HCT116 (cell line): ENCODE measurements at regions of chr3 and their contacts with region 1.

Region 1: DNA sequence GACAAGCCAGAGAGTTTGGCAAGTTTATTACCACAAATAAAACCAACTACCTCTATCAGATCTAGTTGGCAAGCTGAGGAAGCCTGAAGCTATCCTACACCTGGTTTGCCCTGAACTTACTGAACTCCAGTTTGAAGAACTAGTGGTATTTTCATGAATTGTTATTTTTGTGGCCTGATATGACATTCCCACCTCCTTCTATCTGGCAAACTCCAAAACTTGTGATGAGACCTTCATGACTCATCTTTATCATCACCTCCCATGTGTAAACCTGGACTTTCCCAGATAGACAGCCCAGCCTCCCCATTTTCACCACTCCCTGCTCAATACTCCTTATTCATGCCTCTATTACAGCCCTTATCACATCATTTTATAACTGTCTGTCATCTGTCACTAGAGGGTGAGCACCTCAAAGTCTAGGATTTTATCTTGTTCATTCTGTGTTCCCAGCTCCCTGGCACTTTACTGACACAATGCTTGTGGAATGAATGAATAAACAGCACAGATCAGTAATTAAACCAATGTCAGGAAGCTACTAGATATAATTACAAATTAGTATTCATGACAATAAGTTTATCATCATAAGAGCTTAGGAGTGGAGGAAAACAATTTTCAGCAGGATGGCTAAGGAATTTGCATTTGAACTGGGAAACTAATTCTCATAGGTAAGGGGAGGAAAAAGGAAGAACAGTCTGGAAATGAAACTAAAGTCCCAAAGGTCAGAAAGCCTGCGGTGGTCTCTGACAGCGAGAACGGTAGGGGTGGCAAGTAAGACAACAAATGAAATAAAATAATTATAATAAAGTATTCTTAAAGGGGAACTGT is 13.2 kb upstream of the TRANK1 start:
- DNase-seq: no peak
- ATAC-seq: no peak
- H3K4me3 ChIP-seq: no peak overlapping the region
- H3K27ac ChIP-seq: no peak overlapping the region
- H3K4me1 ChIP-seq: peaks cover 0 to 8% of the 10 kb centered on the region in 2 experiments; a peak in 2 of 4 replicates
- H3K27me3 ChIP-seq: no peaks in the 10 kb centered on the region
- CTCF ChIP-seq: no peak
- POLR2A ChIP-seq: no peak
- RAD21 ChIP-seq: no peak

Region 2: DNA sequence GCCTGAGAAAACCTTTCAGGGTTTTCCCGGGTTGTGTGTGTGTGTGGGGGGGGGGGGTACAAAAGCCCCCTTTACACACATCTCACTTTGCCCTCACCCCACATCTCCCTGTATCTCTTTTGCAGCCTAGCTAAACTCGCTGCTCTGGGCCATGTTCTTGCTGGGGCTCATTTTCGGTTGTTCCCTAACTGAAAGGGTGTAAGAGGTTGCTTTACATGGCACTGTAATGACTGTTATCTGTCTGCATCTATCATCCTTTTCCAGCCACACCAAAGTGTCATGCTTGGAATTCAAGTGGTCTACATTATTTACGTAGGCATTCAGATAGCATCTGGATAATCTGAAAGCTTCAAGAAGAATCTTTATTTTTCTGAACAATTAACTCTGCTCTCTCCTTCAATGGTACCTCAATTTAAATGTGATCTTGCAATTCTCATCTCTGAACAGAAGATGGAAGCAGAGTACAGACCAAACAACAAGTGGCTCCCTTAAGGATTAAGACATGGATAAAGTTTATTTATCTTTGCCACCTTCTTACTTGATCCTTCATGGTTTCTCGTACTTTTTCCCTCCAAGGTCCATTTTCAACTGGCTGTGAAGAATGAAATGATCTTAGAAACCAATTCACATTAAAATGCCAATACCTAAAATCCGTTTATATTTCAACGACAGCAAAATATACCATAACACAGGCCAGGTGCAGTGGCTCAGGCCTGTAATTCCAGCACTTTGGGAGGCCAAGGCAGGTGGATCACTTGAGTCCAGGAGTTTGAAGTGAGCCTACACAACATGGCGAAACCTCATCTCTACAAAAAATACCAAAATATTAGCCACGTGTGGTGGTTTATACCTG is 228.6 kb before region 1 on chr3:
- CTCF ChIA-PET with region 1: interaction called, 3 read pairs
- POLR2A ChIA-PET with region 1: no interaction called
- RAD21 ChIA-PET with region 1: no interaction called
- intact Hi-C with region 1: loop called (anchors 2 kb)
- DNase-seq: peak; percentile 39
- ATAC-seq: peak; percentile 83
- H3K4me3 ChIP-seq: no peak overlapping the region
- H3K27ac ChIP-seq: no peak overlapping the region
- H3K4me1 ChIP-seq: no peaks in the 10 kb centered on the region; a peak in 1 of 4 replicates
- H3K27me3 ChIP-seq: peaks cover 9% of the 10 kb centered on the region; the same call in 1 of the 2 replicates
- CTCF ChIP-seq: peak; percentile 55 to 76 (median 73)
- POLR2A ChIP-seq: no peak
- RAD21 ChIP-seq: peak; percentile 89

Region 3: GRCh38 chr3:36756269-36756668 is 201.8 kb before region 1 on chr3:
- CTCF ChIA-PET with region 1: no interaction called
- POLR2A ChIA-PET with region 1: no interaction called
- RAD21 ChIA-PET with region 1: no interaction called
- intact Hi-C with region 1: no loop called
- DNase-seq: no peak
- ATAC-seq: no peak
- H3K4me3 ChIP-seq: no peak overlapping the region
- H3K27ac ChIP-seq: no peak overlapping the region
- H3K4me1 ChIP-seq: no peaks in the 10 kb centered on the region
- H3K27me3 ChIP-seq: peaks cover 51% of the 10 kb centered on the region
- CTCF ChIP-seq: no peak
- POLR2A ChIP-seq: no peak
- RAD21 ChIP-seq: no peak

Region 4: GRCh38 chr3:36792342-36792741 is 165.7 kb before region 1 on chr3:
- CTCF ChIA-PET with region 1: interaction called, 12 read pairs
- POLR2A ChIA-PET with region 1: no interaction called
- RAD21 ChIA-PET with region 1: interaction called in 1 of 2 experiments, 3 read pairs
- intact Hi-C with region 1: no loop called
- DNase-seq: peak; percentile 24
- ATAC-seq: peak; percentile 96
- H3K4me3 ChIP-seq: no peak overlapping the region
- H3K27ac ChIP-seq: no peak overlapping the region
- H3K4me1 ChIP-seq: no peaks in the 10 kb centered on the region
- H3K27me3 ChIP-seq: peaks cover 34% of the 10 kb centered on the region
- CTCF ChIP-seq: peak; percentile 55 to 60 (median 59); a peak in 5 of 6 replicates
- POLR2A ChIP-seq: no peak
- RAD21 ChIP-seq: peak; percentile 75

Region 5: DNA sequence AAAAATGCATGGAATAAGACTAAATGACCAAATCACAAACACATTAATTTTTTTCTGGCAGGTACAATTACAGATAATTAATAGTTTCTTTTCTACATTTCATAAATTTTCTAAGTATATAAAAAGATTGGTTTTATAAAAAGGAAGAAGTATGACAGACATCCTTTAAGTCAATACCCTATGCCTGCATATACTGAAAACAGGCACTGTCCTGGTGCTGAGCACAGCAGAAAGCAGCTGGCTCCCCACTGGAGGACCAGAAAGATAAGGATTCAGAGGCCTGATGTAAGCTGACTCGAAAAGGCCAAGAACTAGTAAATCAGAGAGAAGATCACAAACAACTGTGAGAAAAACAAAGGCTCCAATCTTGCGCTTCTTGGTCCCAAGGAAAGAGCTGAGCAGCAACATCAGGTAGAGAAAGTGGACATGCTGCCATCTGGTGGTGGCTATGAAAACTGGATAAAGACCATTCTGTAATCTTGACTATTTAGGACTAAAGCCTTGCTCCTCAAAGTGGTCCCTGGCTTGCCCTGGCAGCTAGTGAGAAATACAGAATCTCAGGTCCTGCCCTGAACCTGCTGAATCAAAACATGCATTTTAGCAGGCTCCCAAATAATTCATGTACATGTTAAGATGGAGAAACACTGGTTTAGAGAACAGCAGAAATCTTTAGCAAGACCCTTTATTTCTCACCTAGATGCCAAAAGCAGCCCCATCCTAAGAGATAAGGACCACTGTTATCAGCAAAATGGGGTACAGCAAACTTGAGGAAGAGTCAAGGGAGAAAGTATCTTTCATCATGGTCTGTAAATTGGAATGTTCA is 89.2 kb before region 1 on chr3:
- CTCF ChIA-PET with region 1: interaction called, 10 read pairs
- POLR2A ChIA-PET with region 1: no interaction called
- RAD21 ChIA-PET with region 1: interaction called in 1 of 2 experiments, 5 read pairs
- intact Hi-C with region 1: no loop called
- DNase-seq: peak; percentile 48
- ATAC-seq: peak; percentile 96
- H3K4me3 ChIP-seq: no peak overlapping the region
- H3K27ac ChIP-seq: no peak overlapping the region
- H3K4me1 ChIP-seq: no peaks in the 10 kb centered on the region
- H3K27me3 ChIP-seq: peaks cover 28% of the 10 kb centered on the region
- CTCF ChIP-seq: peak; percentile 60 to 84 (median 68)
- POLR2A ChIP-seq: no peak
- RAD21 ChIP-seq: peak; percentile 76

Region 6: GRCh38 chr3:36993326-36994283 is 35.5 kb after region 1 on chr3 and contains the start of gene MLH1:
- CTCF ChIA-PET with region 1: interaction called, 14 read pairs
- POLR2A ChIA-PET with region 1: interaction called, 8 read pairs
- RAD21 ChIA-PET with region 1: interaction called in 1 of 2 experiments, 3 read pairs
- intact Hi-C with region 1: no loop called
- DNase-seq: peak; percentile 100
- ATAC-seq: peak; percentile 90
- H3K4me3 ChIP-seq: peak within 1 kb of the TSS; percentile 57 to 76
- H3K27ac ChIP-seq: peak within 1 kb of the TSS; percentile 90
- H3K4me1 ChIP-seq: peaks cover 4 to 21% of the 10 kb centered on the region in 2 experiments; a peak in 2 of 4 replicates
- H3K27me3 ChIP-seq: no peaks in the 10 kb centered on the region
- CTCF ChIP-seq: no peak
- POLR2A ChIP-seq: peak; percentile 94
- RAD21 ChIP-seq: no peak
- total RNA-seq, gene MLH1: 9.6 TPM

Region 7: DNA sequence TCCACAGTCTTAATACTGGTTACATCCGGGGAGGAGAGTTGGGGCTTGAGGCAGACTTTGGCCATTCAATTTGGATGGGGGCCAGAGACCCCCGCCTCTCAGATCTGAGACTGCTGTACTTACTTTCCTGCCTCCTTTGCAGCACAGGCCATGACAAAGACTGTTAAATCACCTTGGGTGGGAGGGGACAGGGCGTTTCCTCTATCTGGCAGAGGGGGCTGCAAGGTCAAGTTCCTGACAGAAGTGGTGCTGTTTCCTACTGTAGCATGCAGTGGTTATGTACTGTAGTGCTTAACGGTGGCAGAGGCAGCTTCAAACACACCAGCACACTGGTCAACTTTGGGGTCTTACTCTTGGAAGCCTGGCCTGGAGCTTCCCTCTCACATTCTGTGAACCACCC is 477.5 kb after region 1 on chr3:
- CTCF ChIA-PET with region 1: no interaction called
- POLR2A ChIA-PET with region 1: no interaction called
- RAD21 ChIA-PET with region 1: no interaction called
- intact Hi-C with region 1: no loop called
- DNase-seq: no peak
- ATAC-seq: peak; percentile 50
- H3K4me3 ChIP-seq: no peak overlapping the region
- H3K27ac ChIP-seq: no peak overlapping the region
- H3K4me1 ChIP-seq: no peaks in the 10 kb centered on the region
- H3K27me3 ChIP-seq: no peaks in the 10 kb centered on the region
- CTCF ChIP-seq: no peak
- POLR2A ChIP-seq: no peak
- RAD21 ChIP-seq: no peak

Region 8: GRCh38 chr3:37741644-37742043 is 783.6 kb after region 1 on chr3:
- CTCF ChIA-PET with region 1: no interaction called
- POLR2A ChIA-PET with region 1: no interaction called
- RAD21 ChIA-PET with region 1: no interaction called
- intact Hi-C with region 1: no loop called
- DNase-seq: peak; percentile 23
- ATAC-seq: peak; percentile 92
- H3K4me3 ChIP-seq: no peak overlapping the region
- H3K27ac ChIP-seq: no peak overlapping the region
- H3K4me1 ChIP-seq: no peaks in the 10 kb centered on the region
- H3K27me3 ChIP-seq: peaks cover 38% of the 10 kb centered on the region
- CTCF ChIP-seq: peak; percentile 29 to 39 (median 38); a peak in 4 of 6 replicates
- POLR2A ChIP-seq: no peak
- RAD21 ChIP-seq: peak; percentile 72